ENCODE measurements at regions of chr17 and their contacts with region 1.

Region 1: GRCh38 chr17:15257258-15257788 is 7.8 kb downstream of the PMP22 start:
- DNase-seq: peak; percentile 36 to 77
- ATAC-seq: peak; percentile 49 to 72 (median 70)
- H3K4me3 ChIP-seq: no peak overlapping the region
- H3K4me3 Mint-ChIP-seq: no peak overlapping the region
- H3K27ac ChIP-seq: no peak overlapping the region
- H3K27ac Mint-ChIP-seq: no peak overlapping the region
- H3K4me1 ChIP-seq: peaks cover 17% of the 10 kb centered on the region
- H3K4me1 Mint-ChIP-seq: peaks cover 10% of the 10 kb centered on the region in 2 donors
- H3K27me3 ChIP-seq: peaks cover 10% of the 10 kb centered on the region
- H3K27me3 Mint-ChIP-seq: peaks cover 39 to 63% of the 10 kb centered on the region in 2 donors
- CTCF ChIP-seq: peak; percentile 83

Region 2: DNA sequence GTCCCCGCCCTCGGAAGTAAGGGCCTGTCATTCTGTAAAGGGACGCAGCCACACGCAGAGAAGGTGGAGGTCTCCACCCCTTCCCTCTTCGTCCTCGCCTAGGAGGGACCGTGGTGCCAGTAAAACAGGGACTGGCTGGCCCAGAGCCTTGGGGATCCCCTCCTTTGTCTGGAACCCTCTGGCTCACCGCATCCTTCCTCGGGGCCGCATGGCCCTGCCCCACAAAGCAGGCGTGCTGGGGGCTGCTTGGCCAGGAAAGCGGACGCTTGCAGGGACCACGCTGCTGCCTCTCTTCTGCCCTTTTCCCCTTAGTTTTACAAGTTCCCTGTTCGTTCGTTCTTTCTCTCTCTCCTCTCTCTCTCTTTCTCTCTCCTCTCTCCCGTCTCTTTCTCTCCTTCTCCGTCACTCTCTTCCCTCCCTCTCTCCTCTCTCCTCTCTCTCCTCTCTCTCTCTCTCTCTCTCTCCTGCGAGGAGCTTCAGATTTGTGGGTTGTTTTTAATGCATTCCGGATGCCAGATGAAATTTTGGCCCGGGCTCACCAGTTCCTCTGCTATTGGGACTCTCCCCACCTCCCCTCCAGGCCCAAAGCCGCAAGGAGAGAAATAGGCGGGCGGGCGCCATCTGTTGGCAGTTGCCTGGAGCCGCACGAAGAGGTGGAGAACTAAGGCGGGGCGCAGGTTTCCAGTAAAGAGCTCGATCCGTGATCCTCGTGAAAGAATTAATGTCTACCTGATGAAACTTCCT is 245.2 kb after region 1 on chr17:
- intact Hi-C with region 1: loop called (anchors 10 kb)
- DNase-seq: peak; percentile 46 to 71
- ATAC-seq: peak; percentile 73 to 92 (median 75)
- H3K4me3 ChIP-seq: no peak overlapping the region
- H3K4me3 Mint-ChIP-seq: peak overlapping the region; percentile 71
- H3K27ac ChIP-seq: no peak overlapping the region
- H3K27ac Mint-ChIP-seq: peak overlapping the region in 1 of 2 donors; percentile 41
- H3K4me1 ChIP-seq: peaks cover 6% of the 10 kb centered on the region
- H3K4me1 Mint-ChIP-seq: peaks cover 7 to 13% of the 10 kb centered on the region in 2 donors
- H3K27me3 ChIP-seq: no peaks in the 10 kb centered on the region
- H3K27me3 Mint-ChIP-seq: no peaks in the 10 kb centered on the region
- CTCF ChIP-seq: peak; percentile 68

Measured in natural killer cell (primary cell).